Activated CD4-positive, alpha-beta memory T cell treated with anti-CD3 and anti-CD28 coated beads, Interleukin-2, amount 10 ng/mL, durations not matched to agents 7 days and 5 days (primary cell): ENCODE measurements at regions of chr14 and their contacts with region 1.

Region 1: DNA sequence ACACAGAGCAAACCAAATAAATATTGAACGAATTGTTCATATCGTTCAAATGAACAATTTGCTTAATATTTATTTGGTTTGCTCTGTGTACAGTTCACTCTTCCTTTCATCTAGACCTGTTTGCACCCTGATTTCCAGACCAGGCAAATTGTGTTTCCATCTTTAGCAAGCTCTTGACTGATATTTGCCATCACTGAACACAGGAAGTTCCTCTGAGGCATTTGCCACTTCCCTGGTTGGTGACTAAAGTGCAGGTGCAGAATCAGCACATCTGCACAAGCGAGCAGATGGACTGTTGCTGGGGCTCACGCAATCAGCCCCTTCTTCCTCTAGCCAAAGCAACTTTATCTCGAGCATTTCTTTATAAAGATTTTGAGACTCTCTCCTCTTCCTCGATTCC is 112.9 kb downstream of the DAAM1 start:
- DNase-seq: peak; percentile 58
- H3K4me3 Mint-ChIP-seq: no peak overlapping the region
- H3K27ac Mint-ChIP-seq: peak overlapping the region; percentile 18
- H3K4me1 Mint-ChIP-seq: peaks cover 44% of the 10 kb centered on the region
- H3K27me3 Mint-ChIP-seq: no peaks in the 10 kb centered on the region

Region 2: DNA sequence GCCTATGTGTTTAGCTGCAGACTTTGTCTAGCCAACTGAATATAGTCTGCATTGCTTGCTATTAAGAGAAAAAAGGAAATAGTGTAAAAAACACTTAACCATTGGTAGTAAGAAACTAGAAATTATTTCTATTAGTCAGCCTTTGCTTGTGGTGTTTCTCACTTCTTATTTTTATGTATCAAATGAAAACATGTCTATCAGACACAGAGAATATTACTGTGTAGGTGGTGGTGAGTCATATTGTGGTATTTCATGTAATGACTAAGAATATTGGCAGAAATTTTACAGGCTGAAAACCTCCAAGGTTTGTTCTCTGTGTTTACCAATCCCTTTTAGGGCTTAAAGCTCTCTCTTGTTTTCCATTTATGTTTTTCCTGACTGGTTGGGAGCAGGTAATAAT is 25.7 kb before region 1 on chr14:
- CTCF ChIA-PET with region 1: interaction called, 3 read pairs
- POLR2A ChIA-PET with region 1: interaction called, 12 read pairs
- DNase-seq: no peak
- H3K4me3 Mint-ChIP-seq: no peak overlapping the region
- H3K27ac Mint-ChIP-seq: peak overlapping the region; percentile 68
- H3K4me1 Mint-ChIP-seq: peaks cover 36% of the 10 kb centered on the region
- H3K27me3 Mint-ChIP-seq: no peaks in the 10 kb centered on the region